Testis (tissue), 5 donors: ENCODE measurements at regions of chr2 and their contacts with region 1.

Region 1: DNA sequence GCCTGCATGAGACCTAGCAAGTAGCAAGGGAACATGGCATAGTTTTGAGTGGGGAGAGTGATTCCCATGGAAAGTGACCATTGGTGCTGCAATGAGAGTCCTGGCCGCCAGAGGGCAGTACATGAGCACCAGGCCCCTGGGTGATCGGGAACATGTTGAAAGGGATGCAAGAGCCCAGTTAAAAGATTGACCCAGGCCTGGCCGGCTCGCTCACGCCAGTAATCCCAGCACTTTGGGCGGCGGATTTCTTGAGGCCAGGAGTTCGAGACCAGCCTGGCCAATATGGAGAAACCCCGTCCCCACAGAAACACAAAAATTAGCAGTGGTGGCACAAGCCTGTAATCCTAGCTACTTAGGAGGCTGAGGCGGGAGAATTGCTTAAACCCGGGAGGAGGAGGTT is 22.2 kb downstream of the FAP start:
- DNase-seq: peak; percentile 84
- H3K4me3 ChIP-seq: no peak overlapping the region
- H3K27ac ChIP-seq: no peak overlapping the region
- H3K4me1 ChIP-seq: no peaks in the 10 kb centered on the region
- H3K27me3 ChIP-seq: no peaks in the 10 kb centered on the region
- CTCF ChIP-seq: peak; percentile 72 to 88 (median 72)
- POLR2A ChIP-seq: no peak

Region 2: GRCh38 chr2:162301151-162301804 is 80.2 kb after region 1 on chr2:
- intact Hi-C with region 1: loop called (anchors 10 kb)
- DNase-seq: peak; percentile 67
- H3K4me3 ChIP-seq: no peak overlapping the region
- H3K27ac ChIP-seq: no peak overlapping the region
- H3K4me1 ChIP-seq: no peaks in the 10 kb centered on the region
- H3K27me3 ChIP-seq: no peaks in the 10 kb centered on the region
- CTCF ChIP-seq: peak; percentile 74 to 96 (median 78)
- POLR2A ChIP-seq: no peak